Left lung (tissue), 14 donors: ENCODE measurements at regions of chr19 and their contacts with region 1.

Region 1: GRCh38 chr19:46990991-46991676 is 28.5 kb upstream of the NPAS1 start:
- DNase-seq: peak in 3 of 4 donors; percentile 78 to 93 (median 85)
- ATAC-seq: peak; percentile 85
- H3K4me3 ChIP-seq: no peak overlapping the region
- H3K27ac ChIP-seq: peak overlapping the region; percentile 9 to 63
- H3K4me1 ChIP-seq: peaks cover 6 to 35% of the 10 kb centered on the region in 2 donors
- H3K27me3 ChIP-seq: no peaks in the 10 kb centered on the region
- CTCF ChIP-seq: peak; percentile 59 to 77

Region 2: DNA sequence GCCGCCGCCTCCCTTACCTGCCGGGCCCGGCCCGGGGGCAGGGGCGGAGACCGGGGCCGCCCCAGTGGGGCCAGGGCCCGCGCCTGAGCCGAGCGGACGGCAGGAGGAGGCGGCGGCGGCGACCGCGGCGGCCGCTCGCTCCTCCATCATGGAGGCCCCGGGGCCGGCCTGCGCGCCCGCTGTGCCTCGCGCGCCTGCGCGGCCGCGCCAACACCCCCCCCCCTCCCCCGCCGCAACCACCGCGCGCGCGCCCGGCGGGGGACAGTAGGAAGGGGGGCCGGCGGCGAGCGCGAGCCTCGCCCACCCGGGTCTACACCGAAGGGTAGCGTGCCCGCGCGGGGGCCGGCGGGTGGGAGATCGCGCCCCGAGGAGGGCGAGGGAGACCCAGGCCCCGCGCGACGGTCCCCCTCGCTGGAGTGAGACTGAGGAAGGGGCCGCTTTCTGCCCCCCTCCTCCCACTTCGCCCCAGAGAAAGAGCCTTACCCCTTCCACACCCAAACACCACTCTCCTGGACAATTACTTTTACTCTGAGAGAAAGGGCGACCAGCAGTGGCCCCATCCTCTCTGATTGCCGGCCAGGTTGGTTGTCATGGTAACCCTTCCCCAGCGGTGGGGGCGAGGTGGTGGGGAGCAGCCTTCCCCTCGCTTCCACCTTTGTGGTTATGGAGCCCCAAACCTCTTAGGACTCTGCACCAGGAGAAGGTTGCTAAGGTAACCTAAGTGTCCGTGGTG is 244.7 kb before region 1 on chr19 and contains the start of gene STRN4:
- intact Hi-C with region 1: no loop called
- DNase-seq: peak in 3 of 4 donors; percentile 58 to 91 (median 68)
- ATAC-seq: peak; percentile 81
- H3K4me3 ChIP-seq: peak within 1 kb of the TSS; percentile 86 to 98
- H3K27ac ChIP-seq: peak within 1 kb of the TSS; percentile 81 to 85
- H3K4me1 ChIP-seq: peaks cover 5 to 57% of the 10 kb centered on the region in 2 donors
- H3K27me3 ChIP-seq: no peaks in the 10 kb centered on the region
- CTCF ChIP-seq: no peak
- polyA plus RNA-seq, gene STRN4: 70.5 to 97.9 (median 81.3) TPM

Region 3: DNA sequence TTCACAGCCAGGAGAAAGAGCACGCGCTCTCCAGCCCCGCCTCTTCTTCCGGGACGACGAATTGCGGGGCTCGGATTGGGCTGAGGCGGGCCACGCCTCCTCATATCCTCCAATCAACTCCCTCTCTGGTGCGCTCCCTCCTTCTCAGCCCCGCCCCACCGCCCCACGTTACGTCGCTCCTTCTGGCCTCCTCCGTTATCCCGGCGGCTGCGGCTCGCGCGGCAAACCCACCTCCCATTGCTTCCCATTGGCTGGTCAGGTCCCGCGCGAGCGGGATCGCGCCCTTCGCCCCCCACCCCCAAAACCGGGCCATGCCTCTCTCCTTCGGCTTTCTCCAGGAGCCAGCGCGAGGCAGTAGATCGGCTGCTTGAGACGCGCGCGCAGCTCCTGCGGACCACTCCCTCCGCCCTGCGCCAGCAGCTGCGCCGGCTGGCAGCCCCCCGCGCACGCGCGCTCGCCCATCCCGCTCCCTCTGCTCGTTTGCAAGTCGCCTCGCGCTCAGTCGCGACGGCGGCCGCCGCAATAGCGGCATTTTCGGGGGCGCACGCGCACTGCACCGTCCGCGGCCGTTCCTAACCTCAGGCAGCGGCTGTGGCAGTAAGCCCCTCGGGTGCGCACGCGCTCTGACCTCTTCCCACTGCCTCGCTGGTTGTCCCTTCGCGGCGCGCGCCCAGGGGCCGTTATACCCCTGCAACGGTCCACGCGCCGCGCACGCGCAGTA is 130.8 kb before region 1 on chr19:
- intact Hi-C with region 1: loop called in 1 of 2 experiments (anchors 2 kb)
- DNase-seq: peak; percentile 97 to 99 (median 98)
- ATAC-seq: peak; percentile 85
- H3K4me3 ChIP-seq: peak overlapping the region; percentile 74 to 88
- H3K27ac ChIP-seq: peak overlapping the region; percentile 94 to 98
- H3K4me1 ChIP-seq: peaks cover 11 to 70% of the 10 kb centered on the region in 2 donors
- H3K27me3 ChIP-seq: no peaks in the 10 kb centered on the region
- CTCF ChIP-seq: no peak

Region 4: DNA sequence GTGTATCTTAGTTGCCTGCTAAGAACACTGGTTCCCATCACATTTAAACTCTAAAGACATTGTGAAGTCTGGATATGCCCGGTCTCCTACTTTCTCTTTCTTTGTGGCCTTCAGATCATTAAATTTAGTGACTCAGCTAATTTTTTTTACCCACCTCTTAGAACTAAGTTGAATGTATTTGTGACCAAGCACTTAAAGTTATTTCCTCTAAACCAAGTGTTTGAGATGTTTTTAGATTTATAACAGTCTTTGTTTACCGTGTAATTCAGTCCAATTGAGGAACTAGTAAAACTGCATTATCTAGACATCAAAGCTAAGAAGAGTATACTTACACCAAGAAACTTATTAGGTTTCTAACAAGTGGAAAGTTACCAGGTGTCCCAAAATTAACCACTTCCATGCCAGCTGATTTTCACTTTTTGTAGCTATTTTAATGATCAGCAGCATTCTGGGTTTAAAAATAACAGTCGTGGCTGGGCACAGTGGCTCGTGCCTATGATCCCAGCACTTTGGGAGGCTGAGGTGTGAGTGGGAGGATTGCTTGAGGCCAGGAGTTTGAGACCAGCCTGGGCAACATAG is 77.2 kb before region 1 on chr19:
- intact Hi-C with region 1: loop called in 1 of 2 experiments (anchors 10 kb)
- DNase-seq: no peak
- ATAC-seq: peak; percentile 68
- H3K4me3 ChIP-seq: no peak overlapping the region
- H3K27ac ChIP-seq: peak overlapping the region; percentile 38 to 40
- H3K4me1 ChIP-seq: peaks cover 22 to 37% of the 10 kb centered on the region in 2 donors
- H3K27me3 ChIP-seq: no peaks in the 10 kb centered on the region
- CTCF ChIP-seq: no peak